Left cardiac atrium (tissue), 4 donors: ENCODE measurements at regions of chr17 and their contacts with region 1.

Region 1: DNA sequence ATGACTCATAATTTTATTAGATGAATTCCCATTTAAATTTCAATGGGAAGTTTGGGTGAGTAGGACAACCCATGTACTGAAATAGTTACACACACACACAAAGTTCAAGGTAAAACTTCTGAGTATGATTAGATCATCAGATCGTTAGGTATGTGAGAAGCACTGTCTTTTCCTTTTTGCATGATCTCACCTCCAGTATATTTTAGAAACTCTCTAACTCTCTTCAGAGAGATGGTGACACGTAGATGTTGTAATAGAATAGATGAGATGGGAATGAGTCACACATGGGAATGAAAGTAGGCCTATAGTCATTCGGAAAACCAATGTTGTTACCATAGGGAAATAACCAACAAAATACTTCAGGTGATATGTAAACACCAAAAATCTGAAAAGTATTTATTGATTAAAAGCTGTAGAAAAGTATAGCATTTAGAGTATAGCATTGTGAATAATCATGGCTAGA is 22.2 kb downstream of the KRT23 start:
- DNase-seq: no peak
- ATAC-seq: peak in 1 of 2 donors; percentile 90

Region 2: DNA sequence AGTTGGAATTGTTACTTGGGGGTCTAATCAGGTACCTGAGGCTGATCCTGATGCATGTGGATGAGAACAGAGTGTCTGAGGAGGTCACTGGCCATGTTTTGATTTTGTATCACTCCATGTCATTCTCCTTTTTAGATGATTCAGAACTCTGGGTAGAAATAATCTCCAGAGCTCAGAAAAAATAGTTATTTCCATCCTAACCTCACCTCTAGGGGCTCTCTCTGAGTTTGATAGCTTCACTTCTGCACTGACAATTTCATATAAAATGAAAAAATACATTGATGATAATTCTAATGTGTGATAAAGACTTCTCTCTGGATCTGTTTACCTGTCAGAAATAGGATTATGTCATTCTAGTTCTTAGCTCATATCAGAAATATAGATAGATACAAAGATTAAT is 42.0 kb before region 1 on chr17:
- intact Hi-C with region 1: no loop called
- DNase-seq: no peak
- ATAC-seq: no peak

Region 3: DNA sequence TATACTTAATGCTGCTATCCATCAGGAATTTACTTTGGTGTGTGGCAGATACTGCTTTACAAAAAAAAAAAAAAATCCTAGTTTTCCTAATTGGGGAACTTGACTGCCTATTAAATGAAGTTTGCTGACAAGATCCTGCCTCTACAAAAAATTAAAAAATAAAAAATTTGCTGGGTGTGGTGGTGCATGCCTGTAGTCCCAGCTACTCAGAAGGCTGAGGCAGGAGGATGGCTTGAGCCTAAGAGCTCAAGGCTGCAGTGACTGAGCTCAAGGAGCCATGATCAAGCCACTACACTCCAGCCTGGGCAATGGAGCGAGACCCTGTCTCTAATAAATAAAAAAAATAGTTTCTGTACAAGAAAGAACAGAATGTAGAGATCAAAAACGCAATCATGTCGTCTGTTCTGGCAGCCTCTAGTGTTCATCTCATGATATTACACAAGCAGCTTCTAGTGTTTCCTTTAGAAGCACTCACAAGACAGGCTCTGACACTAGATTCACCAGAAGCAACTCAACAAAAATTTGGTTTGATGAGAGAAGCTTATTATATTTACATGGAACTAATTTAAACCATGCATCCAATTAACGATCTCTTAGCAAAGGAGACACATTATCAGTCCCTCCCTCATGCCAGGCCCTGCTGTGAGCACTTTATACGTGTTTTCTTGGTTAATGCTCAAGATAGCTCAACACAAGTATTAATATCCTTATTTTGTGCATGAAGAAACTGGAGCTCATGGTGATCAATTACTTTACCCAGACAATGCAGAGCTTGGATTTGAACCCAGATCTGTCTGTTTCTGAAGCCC is 407.1 kb after region 1 on chr17:
- intact Hi-C with region 1: loop called in 1 of 2 experiments (anchors 10 kb)
- DNase-seq: no peak
- ATAC-seq: no peak